ENCODE measurements at regions of chr2 and their contacts with region 1.

Region 1: GRCh38 chr2:230824406-230824978 is 40.2 kb upstream of the ITM2C start:
- DNase-seq: peak in 1 of 2 donors; percentile 31
- ATAC-seq: peak; percentile 76 to 79
- H3K4me3 ChIP-seq: peak overlapping the region; percentile 18 to 48 (median 45)
- H3K27ac ChIP-seq: no peak overlapping the region
- H3K4me1 ChIP-seq: peaks cover 0 to 6% of the 10 kb centered on the region in 2 donors
- H3K27me3 ChIP-seq: peaks cover 17 to 21% (median 21%) of the 10 kb centered on the region in 3 donors
- CTCF ChIP-seq: peak; percentile 66 to 80 (median 74)
- POLR2A ChIP-seq: no peak

Region 2: DNA sequence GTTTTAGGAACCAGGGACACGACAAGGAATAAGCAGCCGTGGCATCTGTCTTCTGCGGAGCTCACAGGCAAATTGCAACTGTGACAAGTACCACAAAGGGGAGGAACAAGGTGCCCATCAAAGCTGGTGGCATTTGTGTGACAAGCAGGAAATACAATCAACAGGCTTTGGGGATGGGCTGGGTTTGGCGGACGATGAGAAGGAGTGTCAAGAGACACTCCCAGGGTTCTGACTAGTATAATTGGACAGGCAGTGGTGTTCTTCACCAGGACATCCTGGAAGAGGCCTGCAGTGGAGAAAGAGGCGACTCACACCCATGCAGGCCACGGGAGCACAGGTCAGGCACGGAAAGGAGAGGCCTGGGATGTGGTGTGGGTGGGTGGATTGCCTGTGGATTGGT is 157.2 kb after region 1 on chr2:
- in situ Hi-C with region 1: loop called in 2 of 4 experiments (anchors 5 kb)
- intact Hi-C with region 1: no loop called
- DNase-seq: no peak
- ATAC-seq: no peak
- H3K4me3 ChIP-seq: no peak overlapping the region
- H3K27ac ChIP-seq: no peak overlapping the region
- H3K4me1 ChIP-seq: no peaks in the 10 kb centered on the region
- H3K27me3 ChIP-seq: peaks cover 0 to 2% (median 0%) of the 10 kb centered on the region in 3 donors
- CTCF ChIP-seq: no peak
- POLR2A ChIP-seq: no peak

Region 3: DNA sequence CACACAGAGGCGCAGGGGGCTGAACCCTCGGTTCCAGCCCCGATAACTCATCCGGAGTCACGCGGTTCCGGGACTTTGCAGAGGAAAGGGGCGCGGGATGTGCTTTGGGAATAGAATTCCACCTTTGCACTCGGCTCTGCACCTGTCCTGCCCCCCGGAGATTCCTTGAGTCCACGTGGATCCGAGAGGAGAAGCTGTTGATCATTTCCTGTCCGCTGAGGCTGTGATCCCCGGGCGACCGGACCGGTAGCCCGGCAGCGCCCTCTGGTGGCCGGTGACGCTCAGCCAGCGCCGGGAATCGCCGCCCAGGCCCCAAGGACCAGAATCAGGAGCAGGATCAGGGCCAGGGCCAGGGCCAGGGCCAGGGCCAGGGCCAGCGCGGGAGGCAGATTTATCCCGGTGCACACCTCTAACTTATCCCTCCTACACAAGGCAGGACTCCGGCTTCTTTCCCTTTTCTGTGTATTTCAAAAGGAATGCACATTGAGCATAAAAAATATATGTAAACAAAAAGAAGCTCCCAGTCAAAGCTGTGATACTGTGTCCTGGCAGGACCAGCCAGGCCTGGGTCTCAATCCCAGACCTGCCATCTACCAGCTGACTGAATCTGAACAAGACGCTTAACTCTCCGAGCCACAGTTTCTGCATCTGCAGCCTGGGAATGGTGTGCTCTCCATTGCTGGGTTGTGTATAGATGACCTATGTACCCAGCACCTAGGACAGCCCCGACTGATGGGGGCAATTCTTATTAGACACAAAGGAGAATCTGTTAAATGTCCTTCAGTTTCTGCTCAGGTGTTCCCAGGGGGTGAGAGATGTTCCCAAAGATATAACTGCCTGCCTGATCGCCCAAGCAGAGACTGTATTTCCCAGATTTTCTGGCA is 162.9 kb after region 1 on chr2:
- in situ Hi-C with region 1: loop called in 3 of 4 experiments (anchors 5 kb)
- intact Hi-C with region 1: loop called (anchors 1 kb)
- DNase-seq: peak; percentile 23 to 48
- ATAC-seq: peak; percentile 72 to 92
- H3K4me3 ChIP-seq: peak overlapping the region; percentile 38 to 65 (median 48)
- H3K27ac ChIP-seq: no peak overlapping the region
- H3K4me1 ChIP-seq: peaks cover 0 to 4% of the 10 kb centered on the region in 2 donors
- H3K27me3 ChIP-seq: peaks cover 10 to 14% (median 11%) of the 10 kb centered on the region in 3 donors
- CTCF ChIP-seq: peak; percentile 73 to 96 (median 86)
- POLR2A ChIP-seq: no peak

Region 4: GRCh38 chr2:231056453-231057424 is 232.2 kb after region 1 on chr2 and contains the start of gene PSMD1:
- in situ Hi-C with region 1: no loop called
- intact Hi-C with region 1: loop called (anchors 5 kb)
- DNase-seq: peak; percentile 86 to 90
- ATAC-seq: peak; percentile 91 to 92
- H3K4me3 ChIP-seq: peak within 1 kb of the TSS; percentile 94 to 98 (median 96)
- H3K27ac ChIP-seq: peak within 1 kb of the TSS; percentile 93 to 96 (median 94)
- H3K4me1 ChIP-seq: peaks cover 41 to 49% of the 10 kb centered on the region in 2 donors
- H3K27me3 ChIP-seq: no peaks in the 10 kb centered on the region
- CTCF ChIP-seq: peak; percentile 88 to 96 (median 95)
- POLR2A ChIP-seq: peak; percentile 68 to 70
- total RNA-seq, gene PSMD1: 169 to 189 (median 182) TPM

Measured in gastrocnemius medialis (tissue), 4 donors.